HEK293 (cell line): ENCODE measurements at regions of chrX and their contacts with region 1.

Region 1: DNA sequence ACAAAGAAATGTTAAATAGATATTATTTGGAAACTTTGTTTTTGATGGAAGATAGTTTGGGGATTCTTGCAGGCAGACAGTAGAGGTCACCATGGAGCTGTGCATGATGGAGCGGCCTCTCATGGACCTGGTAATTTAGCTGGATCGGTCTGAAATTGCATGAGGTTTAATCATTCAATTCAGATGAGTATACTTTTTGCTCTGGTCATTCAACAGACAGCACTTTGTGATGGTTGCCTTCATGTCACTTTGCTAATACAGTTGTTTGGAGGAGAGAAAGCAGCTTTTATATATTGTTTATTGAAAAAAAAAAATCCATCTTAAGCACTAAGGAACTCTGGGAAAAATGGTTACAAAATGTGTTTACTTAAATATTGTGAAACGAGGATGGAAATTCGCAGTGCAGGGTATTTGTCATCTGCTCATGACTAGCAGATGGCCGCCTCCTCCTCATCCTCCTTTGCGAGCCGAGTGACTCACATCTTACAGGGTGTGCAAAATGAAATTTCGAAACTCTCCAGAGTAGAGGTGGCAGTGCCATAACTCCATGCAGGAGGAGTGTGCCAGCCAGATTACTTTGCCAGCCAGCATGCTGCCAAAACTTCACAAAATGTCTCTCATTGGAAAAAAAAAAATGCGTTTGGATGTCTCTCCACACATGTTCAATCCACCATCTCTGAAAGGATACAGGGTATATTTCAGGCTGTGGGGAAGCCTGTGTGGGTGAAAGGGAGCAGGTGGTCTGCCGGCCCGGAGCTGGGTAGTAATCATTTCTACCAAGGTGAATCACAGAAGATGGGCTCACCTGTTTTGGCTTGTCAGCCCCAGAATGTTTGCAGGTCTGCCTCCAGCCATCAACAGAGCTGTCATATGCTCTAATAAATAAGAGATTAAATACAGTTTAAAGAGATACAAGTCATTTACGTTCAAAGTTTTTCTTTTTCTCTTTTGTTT is 314.9 kb upstream of the DIPK2B start:
- H3K4me3 ChIP-seq: no peak overlapping the region
- H3K27ac ChIP-seq: no peak overlapping the region
- H3K4me1 ChIP-seq: no peaks in the 10 kb centered on the region
- CTCF ChIP-seq: 0 out of 2 replicates have a peak, but pooled peaks have one; percentile 24

Region 2: GRCh38 chrX:46376246-46376885 is 860.8 kb after region 1 on chrX:
- CTCF ChIA-PET with region 1: interaction called, 18 read pairs
- POLR2A ChIA-PET with region 1: no interaction called
- H3K4me3 ChIP-seq: no peak overlapping the region
- H3K27ac ChIP-seq: no peak overlapping the region
- H3K4me1 ChIP-seq: no peaks in the 10 kb centered on the region
- CTCF ChIP-seq: no peak